ENCODE measurements at regions of chr5 and their contacts with region 1.

Region 1: GRCh38 chr5:158770506-158770905 is 329.2 kb downstream of the EBF1 start:
- DNase-seq: no peak
- ATAC-seq: no peak
- H3K4me3 Mint-ChIP-seq: peak overlapping the region; percentile 16
- H3K27ac Mint-ChIP-seq: peak overlapping the region; percentile 59
- H3K4me1 Mint-ChIP-seq: peaks cover 91% of the 10 kb centered on the region
- H3K27me3 Mint-ChIP-seq: no peaks in the 10 kb centered on the region
- CTCF ChIP-seq: no peak

Region 2: GRCh38 chr5:158751961-158752655 is 18.4 kb before region 1 on chr5:
- CTCF ChIA-PET with region 1: no interaction called
- POLR2A ChIA-PET with region 1: interaction called, 18 read pairs
- intact Hi-C with region 1: loop called (anchors 1 kb)
- DNase-seq: no peak
- ATAC-seq: peak; percentile 83
- H3K4me3 Mint-ChIP-seq: peak overlapping the region; percentile 71
- H3K27ac Mint-ChIP-seq: peak overlapping the region; percentile 84
- H3K4me1 Mint-ChIP-seq: peaks cover 92% of the 10 kb centered on the region
- H3K27me3 Mint-ChIP-seq: no peaks in the 10 kb centered on the region
- CTCF ChIP-seq: no peak

Region 3: DNA sequence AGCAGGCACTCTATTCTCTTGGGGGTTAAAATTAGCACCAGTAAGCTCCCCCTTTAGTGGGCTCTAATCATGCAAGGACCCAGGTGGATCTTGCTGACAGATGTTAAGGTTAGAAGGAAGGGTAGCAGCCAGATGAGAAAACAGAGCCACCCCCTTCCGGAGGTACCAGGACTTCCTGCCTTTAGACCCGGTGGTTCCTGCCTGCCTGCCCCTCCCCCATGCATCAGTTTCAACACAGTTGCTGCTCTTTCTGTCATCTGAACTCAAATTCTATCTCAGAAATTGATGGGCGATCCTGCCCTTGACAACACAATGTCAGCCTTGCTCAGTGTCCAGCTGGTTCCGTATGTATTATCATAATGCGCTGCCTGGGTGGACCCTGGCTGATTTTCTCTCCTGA is 41.9 kb after region 1 on chr5:
- CTCF ChIA-PET with region 1: no interaction called
- POLR2A ChIA-PET with region 1: interaction called, 10 read pairs
- intact Hi-C with region 1: loop called (anchors 1 kb)
- DNase-seq: peak; percentile 42
- ATAC-seq: peak; percentile 79
- H3K4me3 Mint-ChIP-seq: peak overlapping the region; percentile 55
- H3K27ac Mint-ChIP-seq: peak overlapping the region; percentile 89
- H3K4me1 Mint-ChIP-seq: peaks cover 99% of the 10 kb centered on the region
- H3K27me3 Mint-ChIP-seq: no peaks in the 10 kb centered on the region
- CTCF ChIP-seq: no peak

Region 4: DNA sequence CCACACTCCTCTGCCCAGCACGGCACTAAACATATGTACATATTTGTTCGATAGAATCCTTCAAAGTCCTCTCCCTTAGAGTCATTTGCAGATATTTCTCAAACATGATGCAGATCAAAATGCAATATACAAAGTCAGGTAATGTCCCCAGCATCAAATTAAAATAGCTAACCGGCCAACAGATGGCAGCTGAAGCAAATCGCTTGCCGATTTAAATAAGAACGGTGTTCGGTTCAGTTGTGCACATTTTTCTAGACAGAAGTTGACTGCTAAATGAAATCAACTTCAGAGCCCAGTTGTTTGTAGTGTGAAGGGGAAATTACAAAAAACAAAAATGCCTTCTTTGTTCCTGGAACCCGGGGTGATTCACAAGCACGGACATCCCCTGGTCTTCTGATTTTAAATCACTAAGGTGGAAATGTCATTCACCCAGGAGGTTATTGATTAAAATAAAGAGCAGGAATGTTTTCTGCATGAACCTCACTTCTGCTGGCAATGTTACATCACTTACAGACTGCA is 110.0 kb after region 1 on chr5:
- CTCF ChIA-PET with region 1: interaction called, 3 read pairs
- POLR2A ChIA-PET with region 1: interaction called, 13 read pairs
- intact Hi-C with region 1: loop called (anchors 2 kb)
- DNase-seq: no peak
- ATAC-seq: peak; percentile 28
- H3K4me3 Mint-ChIP-seq: peak overlapping the region; percentile 70
- H3K27ac Mint-ChIP-seq: peak overlapping the region; percentile 88
- H3K4me1 Mint-ChIP-seq: peaks cover 95% of the 10 kb centered on the region
- H3K27me3 Mint-ChIP-seq: no peaks in the 10 kb centered on the region
- CTCF ChIP-seq: no peak